ENCODE measurements at regions of chr9 and their contacts with region 1.

Region 1: DNA sequence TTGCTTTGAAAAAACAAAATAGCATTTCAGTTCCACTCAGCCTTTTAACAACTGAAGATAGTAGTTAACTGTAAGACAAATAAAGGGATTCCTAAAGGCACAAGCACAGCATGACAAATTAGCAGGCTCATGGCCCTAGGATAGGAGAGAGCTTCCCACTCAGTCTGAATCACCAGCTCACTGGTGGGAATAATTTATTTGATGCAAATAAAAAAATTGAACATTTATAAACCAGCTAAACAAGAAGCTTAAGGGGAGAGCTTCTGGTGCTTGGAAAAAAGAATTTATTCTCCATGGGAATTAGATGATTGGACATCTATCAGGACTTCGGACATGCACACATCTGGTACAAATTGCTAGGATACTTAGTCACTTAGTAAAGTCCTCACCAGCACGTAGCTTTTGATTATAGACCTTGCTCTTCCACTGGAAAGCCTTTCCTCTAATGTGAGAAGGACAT is 294.1 kb upstream of the TNC start:
- DNase-seq: no peak
- ATAC-seq: no peak
- H3K4me3 ChIP-seq: no peak overlapping the region
- H3K4me3 Mint-ChIP-seq: no peak overlapping the region
- H3K27ac ChIP-seq: no peak overlapping the region
- H3K27ac Mint-ChIP-seq: no peak overlapping the region
- H3K4me1 ChIP-seq: no peaks in the 10 kb centered on the region
- H3K4me1 Mint-ChIP-seq: peaks cover 5% of the 10 kb centered on the region
- H3K27me3 ChIP-seq: no peaks in the 10 kb centered on the region
- H3K27me3 Mint-ChIP-seq: peaks cover 7% of the 10 kb centered on the region
- CTCF ChIP-seq: no peak

Region 2: GRCh38 chr9:115213818-115214334 is 198.1 kb before region 1 on chr9:
- CTCF ChIA-PET with region 1: no interaction called
- POLR2A ChIA-PET with region 1: no interaction called
- intact Hi-C with region 1: no loop called
- DNase-seq: no peak
- ATAC-seq: no peak
- H3K4me3 ChIP-seq: no peak overlapping the region
- H3K4me3 Mint-ChIP-seq: no peak overlapping the region
- H3K27ac ChIP-seq: no peak overlapping the region
- H3K27ac Mint-ChIP-seq: no peak overlapping the region
- H3K4me1 ChIP-seq: peaks cover 0 to 24% of the 10 kb centered on the region in 2 donors
- H3K4me1 Mint-ChIP-seq: peaks cover 51% of the 10 kb centered on the region
- H3K27me3 ChIP-seq: no peaks in the 10 kb centered on the region
- H3K27me3 Mint-ChIP-seq: no peaks in the 10 kb centered on the region
- CTCF ChIP-seq: no peak

Region 3: DNA sequence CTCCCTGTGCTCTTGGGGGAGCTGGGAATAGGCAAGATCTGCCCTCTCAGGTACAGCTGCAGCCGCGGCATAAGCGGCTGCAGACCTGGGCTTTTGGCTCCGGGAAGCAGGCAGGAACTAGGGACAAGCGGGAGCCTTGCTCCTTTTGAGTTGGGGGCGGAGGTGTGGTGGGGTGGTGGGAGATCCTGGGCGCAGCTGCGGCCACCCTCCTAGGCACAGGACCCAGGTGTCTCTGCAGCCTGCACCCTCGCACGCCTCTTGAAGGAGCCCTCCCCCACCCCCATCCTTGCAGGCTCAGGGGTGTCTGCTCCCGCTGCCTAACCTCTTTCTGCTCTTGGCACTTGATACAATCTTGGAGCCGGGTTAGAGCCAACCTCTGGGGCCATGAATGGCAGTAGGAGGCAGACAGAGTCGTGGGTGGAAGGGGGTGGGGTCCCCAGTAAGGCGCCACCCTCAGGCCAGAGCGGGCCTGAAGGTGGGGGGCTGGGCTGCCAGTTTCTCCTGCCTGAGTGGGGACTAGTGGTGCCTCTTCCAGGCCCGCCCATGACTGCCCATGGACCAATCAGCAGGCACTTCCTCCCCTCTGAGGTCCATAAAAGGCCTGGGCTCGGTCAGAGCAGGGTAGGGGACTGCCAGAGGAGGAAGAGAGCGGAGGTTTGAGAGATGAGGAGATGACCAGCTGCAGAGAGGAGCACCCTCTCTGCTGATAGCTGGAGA is 26.5 kb before region 1 on chr9:
- CTCF ChIA-PET with region 1: no interaction called
- POLR2A ChIA-PET with region 1: no interaction called
- intact Hi-C with region 1: loop called (anchors 2 kb)
- DNase-seq: no peak
- ATAC-seq: no peak
- H3K4me3 ChIP-seq: no peak overlapping the region
- H3K4me3 Mint-ChIP-seq: no peak overlapping the region
- H3K27ac ChIP-seq: no peak overlapping the region
- H3K27ac Mint-ChIP-seq: no peak overlapping the region
- H3K4me1 ChIP-seq: no peaks in the 10 kb centered on the region
- H3K4me1 Mint-ChIP-seq: no peaks in the 10 kb centered on the region
- H3K27me3 ChIP-seq: no peaks in the 10 kb centered on the region
- H3K27me3 Mint-ChIP-seq: peaks cover 3% of the 10 kb centered on the region
- CTCF ChIP-seq: no peak

Region 4: DNA sequence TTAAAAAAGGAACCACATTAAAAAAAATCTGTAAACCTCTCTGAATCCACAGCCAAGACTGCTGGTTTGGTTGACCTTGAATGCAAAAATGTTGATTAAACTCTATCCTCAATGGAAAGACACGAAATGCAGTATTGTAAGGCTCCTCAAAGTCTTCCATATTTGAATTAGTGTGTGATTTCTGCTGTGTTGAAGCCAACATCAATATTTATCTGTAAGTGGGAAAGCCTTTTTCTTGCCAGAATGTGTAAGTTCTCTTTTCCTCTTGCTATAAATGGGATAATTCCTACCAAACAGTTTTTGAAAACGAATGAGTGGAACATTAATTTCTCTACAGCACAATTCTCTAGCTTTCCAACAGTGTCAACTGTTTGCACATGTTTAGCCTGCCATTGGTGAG is 128.1 kb after region 1 on chr9:
- CTCF ChIA-PET with region 1: no interaction called
- POLR2A ChIA-PET with region 1: no interaction called
- intact Hi-C with region 1: no loop called
- DNase-seq: no peak
- ATAC-seq: no peak
- H3K4me3 ChIP-seq: no peak overlapping the region
- H3K4me3 Mint-ChIP-seq: no peak overlapping the region
- H3K27ac ChIP-seq: no peak overlapping the region
- H3K27ac Mint-ChIP-seq: no peak overlapping the region
- H3K4me1 ChIP-seq: no peaks in the 10 kb centered on the region
- H3K4me1 Mint-ChIP-seq: no peaks in the 10 kb centered on the region
- H3K27me3 ChIP-seq: no peaks in the 10 kb centered on the region
- H3K27me3 Mint-ChIP-seq: peaks cover 6% of the 10 kb centered on the region
- CTCF ChIP-seq: no peak

Measured in B cell (primary cell).